OCI-LY7 (cell line): ENCODE measurements at regions of chr4 and their contacts with region 1.

Region 1: DNA sequence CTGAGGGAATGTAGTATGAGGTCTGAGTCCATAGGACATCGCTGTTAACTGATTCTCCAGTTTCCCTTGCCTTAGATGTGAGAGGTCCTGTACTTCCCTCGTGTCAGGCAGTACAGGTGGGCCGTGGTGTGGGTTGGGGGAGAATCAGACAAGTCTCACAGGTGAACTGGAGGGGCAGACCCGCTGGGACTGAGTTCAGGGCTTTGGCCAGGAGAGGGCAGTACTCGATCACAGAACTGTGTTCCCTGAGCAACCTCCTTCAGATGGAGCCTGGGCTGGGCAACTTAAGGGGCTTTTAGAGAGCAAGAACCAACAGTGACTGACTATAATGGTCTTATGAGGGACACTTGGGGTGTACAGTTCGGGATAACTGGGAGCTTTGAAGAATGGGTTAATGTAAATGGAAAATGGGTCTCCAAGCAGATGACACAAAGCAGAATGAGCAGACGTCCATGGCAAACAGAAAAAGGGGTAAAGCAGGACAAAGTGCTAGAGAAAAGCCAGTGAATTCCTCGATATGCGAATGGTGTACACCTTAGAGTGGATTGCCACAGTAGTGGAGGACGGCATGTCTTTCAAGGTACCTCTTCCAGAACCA is 83.6 kb downstream of the CCNG2 start:
- DNase-seq: peak; percentile 72
- H3K4me3 ChIP-seq: no peak overlapping the region
- H3K27ac ChIP-seq: no peak overlapping the region
- H3K4me1 ChIP-seq: peaks cover 2% of the 10 kb centered on the region
- CTCF ChIP-seq: peak; percentile 95

Region 2: GRCh38 chr4:77308843-77309242 is 68.3 kb after region 1 on chr4:
- CTCF ChIA-PET with region 1: no interaction called
- POLR2A ChIA-PET with region 1: interaction called, 3 read pairs
- intact Hi-C with region 1: loop called (anchors 2 kb)
- DNase-seq: peak; percentile 50
- H3K4me3 ChIP-seq: no peak overlapping the region
- H3K27ac ChIP-seq: no peak overlapping the region
- H3K4me1 ChIP-seq: no peaks in the 10 kb centered on the region
- CTCF ChIP-seq: peak; percentile 78

Region 3: GRCh38 chr4:77358315-77358928 is 117.9 kb after region 1 on chr4:
- CTCF ChIA-PET with region 1: no interaction called
- POLR2A ChIA-PET with region 1: no interaction called
- intact Hi-C with region 1: loop called (anchors 1 kb)
- DNase-seq: peak; percentile 42
- H3K4me3 ChIP-seq: no peak overlapping the region
- H3K27ac ChIP-seq: no peak overlapping the region
- H3K4me1 ChIP-seq: no peaks in the 10 kb centered on the region
- CTCF ChIP-seq: peak; percentile 82

Region 4: DNA sequence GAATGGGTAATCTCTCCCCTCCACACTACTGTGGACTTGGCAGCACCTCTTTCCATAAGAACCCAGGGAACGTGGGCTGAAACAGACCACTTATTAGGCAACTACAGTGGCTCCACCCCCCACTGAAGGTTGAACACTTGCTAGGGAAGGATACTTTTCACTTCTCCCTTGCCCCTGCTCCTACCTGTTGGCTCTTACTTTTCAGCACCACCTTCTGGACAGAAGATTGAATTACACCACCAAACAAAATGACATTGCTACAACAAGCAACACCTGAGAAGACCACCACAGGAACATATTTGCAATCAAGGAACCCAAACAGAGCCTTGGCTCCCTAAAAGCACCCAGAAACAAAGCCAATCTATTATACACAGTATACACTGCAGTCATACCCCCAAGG is 232.9 kb after region 1 on chr4:
- CTCF ChIA-PET with region 1: no interaction called
- POLR2A ChIA-PET with region 1: no interaction called
- intact Hi-C with region 1: loop called (anchors 10 kb)
- DNase-seq: peak; percentile 36
- H3K4me3 ChIP-seq: no peak overlapping the region
- H3K27ac ChIP-seq: no peak overlapping the region
- H3K4me1 ChIP-seq: no peaks in the 10 kb centered on the region
- CTCF ChIP-seq: peak; percentile 78